ENCODE measurements at regions of chr9 and their contacts with region 1.

Region 1: DNA sequence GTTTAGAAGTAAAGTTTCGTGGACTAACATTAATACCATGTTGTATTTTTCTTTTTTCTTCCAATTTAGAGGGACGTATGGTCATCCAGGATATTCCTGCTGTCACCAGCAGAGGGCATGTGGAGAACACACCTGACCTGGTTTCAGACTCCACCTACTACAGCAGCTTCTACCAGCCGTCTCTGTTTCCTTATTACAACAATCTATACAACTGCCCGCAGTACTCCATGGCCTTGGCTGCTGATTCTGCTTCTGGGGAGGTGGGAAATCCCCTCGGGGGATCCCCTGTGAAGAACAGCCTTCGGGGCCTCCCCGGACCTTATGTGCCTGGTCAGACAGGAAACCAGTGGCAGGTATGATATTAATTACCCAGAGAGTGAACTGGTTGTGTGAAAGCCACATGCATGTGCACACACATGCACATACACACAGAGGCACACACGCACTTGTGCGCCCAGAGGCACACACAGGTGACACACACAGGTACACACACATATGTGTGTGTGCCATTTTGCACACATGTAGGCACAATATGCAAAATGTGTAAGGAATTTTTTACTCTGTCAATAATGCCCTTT is 52.4 kb downstream of the DMRT1 start:
- DNase-seq: no peak
- H3K4me3 ChIP-seq: no peak overlapping the region
- H3K27me3 ChIP-seq: no peaks in the 10 kb centered on the region; the same call in 1 of the 2 replicates
- CTCF ChIP-seq: peak; percentile 77

Region 2: GRCh38 chr9:347667-348292 is 546.2 kb before region 1 on chr9:
- CTCF ChIA-PET with region 1: no interaction called
- POLR2A ChIA-PET with region 1: no interaction called
- DNase-seq: no peak
- H3K4me3 ChIP-seq: no peak overlapping the region
- H3K27me3 ChIP-seq: no peaks in the 10 kb centered on the region; the same call in 1 of the 2 replicates
- CTCF ChIP-seq: peak; percentile 61

Region 3: DNA sequence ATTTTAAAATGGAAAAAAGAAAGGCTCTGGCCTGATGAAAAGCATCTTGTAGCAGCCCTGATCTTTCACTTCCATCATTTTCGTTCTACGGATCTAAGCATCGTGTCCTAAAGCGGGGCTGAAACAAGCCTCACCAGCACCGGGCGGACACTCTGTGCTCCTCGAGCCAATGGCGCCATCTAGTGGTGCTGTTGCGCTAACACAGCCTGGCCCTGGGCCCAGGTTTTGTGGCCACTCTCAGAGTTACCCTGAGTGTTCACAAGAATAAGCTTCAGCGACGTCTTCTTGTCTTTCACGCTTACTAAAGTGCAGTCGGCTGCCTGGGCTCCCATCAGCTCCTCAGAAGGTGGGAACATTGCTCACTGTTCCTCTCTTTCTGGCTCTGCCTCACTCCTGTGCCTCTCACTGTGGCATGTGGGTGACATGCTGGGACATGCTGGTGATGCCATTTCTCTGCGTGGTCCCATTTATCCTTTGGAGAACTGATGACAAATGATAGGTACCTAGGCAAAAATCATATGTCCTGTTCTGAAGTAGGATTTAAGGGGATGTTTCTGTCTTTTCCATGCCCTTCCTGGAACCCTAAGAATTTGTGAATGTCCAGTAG is 115.3 kb after region 1 on chr9:
- CTCF ChIA-PET with region 1: interaction called, 69 read pairs
- POLR2A ChIA-PET with region 1: no interaction called
- DNase-seq: no peak
- H3K4me3 ChIP-seq: no peak overlapping the region
- H3K27me3 ChIP-seq: no peaks in the 10 kb centered on the region
- CTCF ChIP-seq: peak; percentile 96

Measured in BJ (cell line).